ENCODE measurements at regions of chr2 and their contacts with region 1.

Region 1: DNA sequence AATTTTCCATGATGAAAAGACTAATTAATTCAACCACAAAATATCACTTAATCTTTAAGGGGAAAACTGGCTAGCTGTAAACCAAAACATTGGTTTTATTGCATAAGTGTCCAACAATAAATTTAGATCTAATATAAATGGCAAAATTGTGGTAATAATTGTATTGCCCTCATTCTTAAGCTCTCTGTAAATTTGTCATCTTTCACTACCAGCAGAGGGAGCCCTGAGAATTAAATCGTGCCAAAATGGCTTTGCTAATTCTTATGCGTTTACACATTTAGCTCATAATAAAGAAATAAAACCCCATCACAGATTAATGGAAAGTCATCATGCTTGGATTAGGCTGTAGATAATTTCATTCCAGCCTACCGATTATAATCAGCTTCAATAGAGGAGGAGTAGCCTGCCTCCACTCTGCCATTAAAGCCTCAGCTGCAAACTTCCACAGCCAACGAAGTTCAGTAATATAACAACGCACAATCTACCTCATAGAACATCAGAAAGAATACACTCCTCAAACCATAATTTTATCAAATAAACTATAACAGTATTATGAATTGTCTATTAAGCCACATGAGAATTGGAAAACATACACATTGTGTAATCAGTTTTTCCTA is 70.0 kb upstream of the ATP5MC3 start:
- DNase-seq: no peak
- H3K4me3 Mint-ChIP-seq: no peak overlapping the region
- H3K27ac Mint-ChIP-seq: no peak overlapping the region
- H3K4me1 Mint-ChIP-seq: peaks cover 3% of the 10 kb centered on the region
- H3K27me3 Mint-ChIP-seq: peaks cover 18% of the 10 kb centered on the region

Region 2: GRCh38 chr2:175181104-175181876 is 70.2 kb before region 1 on chr2 and contains the start of gene ATP5MC3:
- CTCF ChIA-PET with region 1: interaction called, 10 read pairs
- POLR2A ChIA-PET with region 1: no interaction called
- intact Hi-C with region 1: no loop called
- DNase-seq: peak; percentile 95
- H3K4me3 Mint-ChIP-seq: peak within 1 kb of the TSS; percentile 95
- H3K27ac Mint-ChIP-seq: peak within 1 kb of the TSS; percentile 95
- H3K4me1 Mint-ChIP-seq: peaks cover 29% of the 10 kb centered on the region
- H3K27me3 Mint-ChIP-seq: no peaks in the 10 kb centered on the region
- total RNA-seq, gene ATP5MC3: 346 to 347 TPM

Region 3: GRCh38 chr2:175203621-175204496 is 47.7 kb before region 1 on chr2:
- CTCF ChIA-PET with region 1: interaction called, 44 read pairs
- POLR2A ChIA-PET with region 1: no interaction called
- intact Hi-C with region 1: no loop called
- DNase-seq: peak; percentile 76
- H3K4me3 Mint-ChIP-seq: no peak overlapping the region
- H3K27ac Mint-ChIP-seq: no peak overlapping the region
- H3K4me1 Mint-ChIP-seq: peaks cover 6% of the 10 kb centered on the region
- H3K27me3 Mint-ChIP-seq: peaks cover 14% of the 10 kb centered on the region

Region 4: DNA sequence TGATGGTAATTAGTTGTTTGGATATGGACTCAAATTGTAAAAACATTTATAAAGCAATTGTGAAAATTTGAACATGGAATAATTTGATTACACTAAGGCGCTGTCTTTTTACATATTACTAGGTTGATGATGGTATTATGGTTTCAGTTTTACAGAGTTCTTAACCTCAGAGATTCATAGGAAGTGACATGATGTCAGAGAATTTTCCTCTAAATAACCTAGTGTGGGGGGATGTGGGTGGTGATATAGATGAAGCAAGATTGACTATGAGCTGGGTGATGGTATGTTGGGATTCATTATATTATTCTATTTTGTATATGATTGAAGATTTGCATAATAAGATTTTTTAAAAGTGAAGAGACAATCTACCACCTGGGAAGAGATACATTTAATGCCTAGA is 24.1 kb before region 1 on chr2:
- CTCF ChIA-PET with region 1: interaction called, 23 read pairs
- POLR2A ChIA-PET with region 1: no interaction called
- intact Hi-C with region 1: loop called (anchors 5 kb)
- DNase-seq: no peak
- H3K4me3 Mint-ChIP-seq: no peak overlapping the region
- H3K27ac Mint-ChIP-seq: peak overlapping the region; percentile 46
- H3K4me1 Mint-ChIP-seq: peaks cover 18% of the 10 kb centered on the region
- H3K27me3 Mint-ChIP-seq: peaks cover 21% of the 10 kb centered on the region

Region 5: DNA sequence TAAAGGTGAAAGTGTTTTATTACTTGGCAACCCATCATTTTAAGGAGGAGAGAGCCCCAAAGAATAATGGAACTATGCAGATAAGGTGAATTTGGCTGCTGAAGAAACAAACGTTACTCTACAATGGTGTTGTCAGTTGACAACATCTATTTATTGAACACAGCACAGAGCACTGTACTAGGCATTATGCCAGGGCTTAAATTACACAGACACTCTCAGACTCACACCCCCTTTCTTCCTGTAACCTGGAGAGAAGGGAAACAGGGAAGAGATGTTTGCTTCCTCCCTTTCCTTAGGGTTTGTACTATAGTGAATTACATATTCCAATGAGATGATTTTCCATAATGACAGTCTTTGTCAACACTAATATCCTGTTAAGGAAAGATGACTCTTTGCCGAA is 24.0 kb after region 1 on chr2:
- CTCF ChIA-PET with region 1: interaction called, 16 read pairs
- POLR2A ChIA-PET with region 1: no interaction called
- intact Hi-C with region 1: no loop called
- DNase-seq: no peak
- H3K4me3 Mint-ChIP-seq: no peak overlapping the region
- H3K27ac Mint-ChIP-seq: no peak overlapping the region
- H3K4me1 Mint-ChIP-seq: no peaks in the 10 kb centered on the region
- H3K27me3 Mint-ChIP-seq: peaks cover 9% of the 10 kb centered on the region

Region 6: DNA sequence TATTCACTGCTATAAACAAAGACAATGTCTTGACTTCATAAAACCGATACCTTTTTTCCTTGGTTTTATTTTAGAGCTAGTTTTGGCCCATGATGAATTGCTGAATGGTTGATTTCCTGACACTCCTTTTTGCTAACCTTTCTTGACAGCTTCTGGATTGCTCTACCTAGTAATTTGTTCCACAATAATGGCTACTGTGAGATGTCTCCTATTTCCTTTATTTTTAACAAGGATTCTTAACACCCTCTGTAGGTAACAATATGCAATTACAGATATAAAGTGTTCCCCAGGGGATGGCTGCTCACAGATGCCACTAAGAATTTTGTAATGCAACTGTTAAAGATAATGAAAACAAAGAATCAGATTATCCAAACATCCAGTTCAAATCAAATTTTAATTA is 30.8 kb after region 1 on chr2:
- CTCF ChIA-PET with region 1: interaction called, 53 read pairs
- POLR2A ChIA-PET with region 1: no interaction called
- intact Hi-C with region 1: loop called (anchors 1 kb)
- DNase-seq: no peak
- H3K4me3 Mint-ChIP-seq: no peak overlapping the region
- H3K27ac Mint-ChIP-seq: no peak overlapping the region
- H3K4me1 Mint-ChIP-seq: peaks cover 3% of the 10 kb centered on the region
- H3K27me3 Mint-ChIP-seq: peaks cover 3% of the 10 kb centered on the region

Region 7: GRCh38 chr2:176096986-176097819 is 845.7 kb after region 1 on chr2:
- CTCF ChIA-PET with region 1: interaction called, 24 read pairs
- POLR2A ChIA-PET with region 1: no interaction called
- intact Hi-C with region 1: loop called (anchors 5 kb)
- DNase-seq: peak; percentile 70
- H3K4me3 Mint-ChIP-seq: peak overlapping the region; percentile 57
- H3K27ac Mint-ChIP-seq: peak overlapping the region; percentile 14
- H3K4me1 Mint-ChIP-seq: peaks cover 18% of the 10 kb centered on the region
- H3K27me3 Mint-ChIP-seq: peaks cover 84% of the 10 kb centered on the region

Measured in activated CD4-positive, alpha-beta memory T cell treated with anti-CD3 and anti-CD28 coated beads for 36 hours (primary cell).